PC-3 (cell line): ENCODE measurements at regions of chr5 and their contacts with region 1.

Region 1: DNA sequence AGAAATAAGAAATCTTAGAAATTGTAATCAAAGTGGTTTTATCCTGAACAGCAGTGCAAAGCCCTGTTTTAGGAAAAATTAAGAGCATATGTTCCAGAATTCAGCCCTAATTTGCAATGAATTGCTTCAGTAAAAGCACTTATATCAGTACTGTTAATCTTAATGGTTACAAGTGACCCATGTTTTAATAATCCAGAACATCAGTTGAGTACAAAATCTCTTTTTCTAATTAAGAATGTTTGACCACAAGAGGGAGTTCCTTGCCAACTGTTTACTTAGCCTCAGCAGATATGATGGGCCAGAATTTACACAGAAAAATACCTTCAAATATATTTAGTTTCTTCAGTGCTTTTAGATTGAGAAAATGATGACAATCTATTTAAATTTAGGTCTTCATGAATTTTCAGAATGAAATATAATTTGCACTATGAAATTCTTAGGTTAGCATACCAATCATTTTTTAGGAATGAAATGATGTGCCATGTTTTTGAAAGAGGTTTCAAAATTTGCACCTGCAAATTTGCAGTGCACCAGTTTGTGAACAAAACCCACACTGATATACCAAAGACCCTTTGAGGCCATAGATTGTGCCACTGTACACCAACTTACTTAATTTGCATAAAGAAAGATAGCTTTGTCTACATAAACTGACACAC is 926.3 kb upstream of the ARRDC3 start:
- DNase-seq: peak; percentile 61
- ATAC-seq: peak; percentile 64
- H3K4me3 ChIP-seq: no peak overlapping the region
- H3K27ac ChIP-seq: no peak overlapping the region
- H3K4me1 ChIP-seq: no peaks in the 10 kb centered on the region
- H3K27me3 ChIP-seq: no peaks in the 10 kb centered on the region
- CTCF ChIP-seq: peak; percentile 70

Region 2: GRCh38 chr5:91499943-91500531 is 809.4 kb before region 1 on chr5:
- CTCF ChIA-PET with region 1: no interaction called
- POLR2A ChIA-PET with region 1: no interaction called
- intact Hi-C with region 1: loop called (anchors 5 kb)
- DNase-seq: peak; percentile 82
- ATAC-seq: peak; percentile 75
- H3K4me3 ChIP-seq: no peak overlapping the region
- H3K27ac ChIP-seq: no peak overlapping the region
- H3K4me1 ChIP-seq: no peaks in the 10 kb centered on the region
- H3K27me3 ChIP-seq: no peaks in the 10 kb centered on the region
- CTCF ChIP-seq: peak; percentile 92

Region 3: GRCh38 chr5:91928754-91929521 is 380.5 kb before region 1 on chr5:
- CTCF ChIA-PET with region 1: no interaction called
- POLR2A ChIA-PET with region 1: no interaction called
- intact Hi-C with region 1: loop called (anchors 5 kb)
- DNase-seq: peak; percentile 67
- ATAC-seq: peak; percentile 72
- H3K4me3 ChIP-seq: no peak overlapping the region
- H3K27ac ChIP-seq: no peak overlapping the region
- H3K4me1 ChIP-seq: no peaks in the 10 kb centered on the region
- H3K27me3 ChIP-seq: peaks cover 4% of the 10 kb centered on the region; the same call in 1 of the 2 replicates
- CTCF ChIP-seq: peak; percentile 86

Region 4: GRCh38 chr5:91983869-91984268 is 325.6 kb before region 1 on chr5:
- CTCF ChIA-PET with region 1: no interaction called
- POLR2A ChIA-PET with region 1: no interaction called
- intact Hi-C with region 1: no loop called
- DNase-seq: no peak
- ATAC-seq: no peak
- H3K4me3 ChIP-seq: no peak overlapping the region
- H3K27ac ChIP-seq: no peak overlapping the region
- H3K4me1 ChIP-seq: no peaks in the 10 kb centered on the region
- H3K27me3 ChIP-seq: no peaks in the 10 kb centered on the region
- CTCF ChIP-seq: no peak

Region 5: GRCh38 chr5:92222449-92222848 is 87.0 kb before region 1 on chr5:
- CTCF ChIA-PET with region 1: no interaction called
- POLR2A ChIA-PET with region 1: no interaction called
- intact Hi-C with region 1: no loop called
- DNase-seq: peak; percentile 30
- ATAC-seq: peak; percentile 53
- H3K4me3 ChIP-seq: no peak overlapping the region
- H3K27ac ChIP-seq: no peak overlapping the region
- H3K4me1 ChIP-seq: no peaks in the 10 kb centered on the region
- H3K27me3 ChIP-seq: no peaks in the 10 kb centered on the region
- CTCF ChIP-seq: peak; percentile 54

Region 6: DNA sequence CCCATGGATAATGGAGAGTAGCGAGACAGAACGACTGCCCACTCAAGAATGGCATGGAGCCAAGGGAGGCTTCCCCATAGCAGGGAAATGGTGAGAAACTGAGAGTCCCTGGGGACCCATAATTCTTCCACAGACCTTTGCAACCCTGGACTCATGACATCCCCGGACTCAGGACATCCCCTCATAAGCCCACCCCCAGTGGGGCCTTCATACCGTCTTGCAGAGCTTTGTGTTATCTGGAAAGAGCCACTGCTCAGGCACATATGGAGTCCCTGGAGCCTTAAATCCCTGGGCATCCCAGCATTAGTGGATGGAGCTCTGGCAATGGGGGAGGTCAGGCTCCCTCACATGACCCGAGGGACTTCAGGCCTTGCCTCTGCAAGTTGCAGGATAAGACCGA is 60.9 kb before region 1 on chr5:
- CTCF ChIA-PET with region 1: no interaction called
- POLR2A ChIA-PET with region 1: no interaction called
- intact Hi-C with region 1: no loop called
- DNase-seq: no peak
- ATAC-seq: no peak
- H3K4me3 ChIP-seq: no peak overlapping the region
- H3K27ac ChIP-seq: no peak overlapping the region
- H3K4me1 ChIP-seq: no peaks in the 10 kb centered on the region
- H3K27me3 ChIP-seq: no peaks in the 10 kb centered on the region
- CTCF ChIP-seq: no peak

Region 7: DNA sequence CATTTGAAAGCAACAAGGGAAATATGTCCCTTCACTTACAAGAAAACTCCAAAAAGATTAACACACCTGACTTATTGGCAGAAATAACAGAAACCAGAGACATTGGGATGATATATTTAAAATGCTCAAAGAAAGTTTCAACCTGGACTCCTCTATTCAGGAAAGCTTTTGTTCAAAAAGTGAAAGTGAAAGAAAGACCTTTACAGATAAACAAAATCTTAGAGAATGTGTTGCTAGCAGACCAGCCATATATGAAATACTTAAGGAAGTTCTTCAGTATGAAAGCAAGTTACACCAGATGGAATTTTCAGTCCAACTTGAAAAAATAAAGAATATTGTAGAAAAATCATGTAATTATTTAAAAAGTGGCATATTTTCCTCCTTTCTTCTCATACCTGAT is 196.5 kb after region 1 on chr5:
- CTCF ChIA-PET with region 1: no interaction called
- POLR2A ChIA-PET with region 1: no interaction called
- intact Hi-C with region 1: loop called (anchors 10 kb)
- DNase-seq: no peak
- ATAC-seq: no peak
- H3K4me3 ChIP-seq: peak overlapping the region; percentile 28; the same call in 1 of the 2 replicates
- H3K27ac ChIP-seq: no peak overlapping the region
- H3K4me1 ChIP-seq: no peaks in the 10 kb centered on the region
- H3K27me3 ChIP-seq: no peaks in the 10 kb centered on the region
- CTCF ChIP-seq: no peak

Region 8: GRCh38 chr5:92838253-92838652 is 528.8 kb after region 1 on chr5:
- CTCF ChIA-PET with region 1: no interaction called
- POLR2A ChIA-PET with region 1: no interaction called
- intact Hi-C with region 1: loop called (anchors 1 kb)
- DNase-seq: peak; percentile 52
- ATAC-seq: peak; percentile 17; the same call in 1 of the 2 replicates
- H3K4me3 ChIP-seq: no peak overlapping the region
- H3K27ac ChIP-seq: peak overlapping the region; percentile 83
- H3K4me1 ChIP-seq: peaks cover 29% of the 10 kb centered on the region
- H3K27me3 ChIP-seq: no peaks in the 10 kb centered on the region
- CTCF ChIP-seq: peak; percentile 62